OCI-LY7 (cell line): ENCODE measurements at regions of chr6 and their contacts with region 1.

Region 1: GRCh38 chr6:151451950-151452749 is at the start of gene RMND1:
- DNase-seq: peak; percentile 100
- H3K4me3 ChIP-seq: peak within 1 kb of the TSS; percentile 79
- H3K27ac ChIP-seq: peak within 1 kb of the TSS; percentile 70
- H3K4me1 ChIP-seq: peaks cover 24% of the 10 kb centered on the region
- CTCF ChIP-seq: no peak
- total RNA-seq, gene RMND1: 10.2 and 21.2 TPM in 2 replicates

Region 2: DNA sequence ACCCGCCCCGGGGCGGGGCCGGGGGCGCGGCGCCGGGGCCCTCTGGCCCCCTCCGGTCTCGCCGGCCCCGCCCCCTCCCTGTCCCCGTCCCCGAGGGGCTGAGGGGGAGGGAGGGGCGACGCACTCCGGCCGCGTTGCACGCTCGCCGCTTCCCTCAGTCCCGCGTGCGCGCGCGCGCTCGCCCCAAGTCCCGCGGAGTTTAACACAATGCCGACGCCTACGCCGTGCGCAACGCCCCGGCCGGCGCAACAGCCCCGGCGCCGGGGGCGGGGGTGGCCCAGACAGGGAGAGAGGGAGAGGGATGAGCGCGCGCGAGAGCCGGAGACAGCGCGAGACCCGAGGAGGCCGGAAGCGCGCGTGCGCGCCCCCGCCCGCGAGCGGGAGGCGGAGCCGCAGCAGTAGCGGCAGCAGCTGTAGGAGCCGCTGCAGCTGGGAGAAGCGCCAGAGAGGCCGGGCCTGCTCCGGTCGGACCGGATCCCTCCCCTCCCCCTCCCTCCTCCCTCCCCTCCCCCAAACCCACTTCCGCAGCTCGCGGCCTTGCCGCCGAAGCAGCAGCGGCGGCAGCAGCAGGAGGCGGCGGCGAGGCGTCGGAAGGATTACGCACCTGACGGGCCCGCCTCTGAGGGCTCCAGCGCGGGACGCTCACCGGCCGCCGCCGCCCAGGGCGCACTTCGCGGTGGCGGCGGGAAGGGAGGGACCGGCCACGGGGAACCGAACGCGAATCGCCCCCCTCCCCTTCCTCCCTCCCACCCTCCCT is 61.7 kb before region 1 on chr6:
- CTCF ChIA-PET with region 1: interaction called, 3 read pairs
- POLR2A ChIA-PET with region 1: interaction called, 6 read pairs
- intact Hi-C with region 1: loop called (anchors 1 kb)
- DNase-seq: peak; percentile 99
- H3K4me3 ChIP-seq: peak overlapping the region; percentile 99
- H3K27ac ChIP-seq: peak overlapping the region; percentile 97
- H3K4me1 ChIP-seq: peaks cover 55% of the 10 kb centered on the region
- CTCF ChIP-seq: no peak

Region 3: DNA sequence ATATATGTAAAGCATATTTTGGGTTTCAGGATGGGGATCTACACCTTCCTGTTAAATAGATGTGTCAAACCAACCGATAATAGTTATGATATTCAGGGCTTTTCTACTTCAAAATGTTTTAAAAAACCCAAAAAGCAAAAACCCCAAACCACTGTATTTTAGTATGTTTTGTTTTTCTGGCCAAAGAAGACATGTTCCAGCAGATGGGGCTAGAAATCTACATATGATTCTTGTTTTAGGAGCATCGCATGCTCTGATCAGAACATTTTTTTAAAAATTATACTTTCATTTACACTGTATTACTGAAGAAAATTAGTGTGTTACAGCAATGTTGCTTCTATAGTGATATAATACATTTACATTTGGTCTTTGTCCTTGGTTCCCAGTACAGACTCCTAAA is 11.2 kb before region 1 on chr6:
- CTCF ChIA-PET with region 1: no interaction called
- POLR2A ChIA-PET with region 1: interaction called, 15 read pairs
- intact Hi-C with region 1: no loop called
- DNase-seq: peak; percentile 16
- H3K4me3 ChIP-seq: no peak overlapping the region
- H3K27ac ChIP-seq: no peak overlapping the region
- H3K4me1 ChIP-seq: no peaks in the 10 kb centered on the region
- CTCF ChIP-seq: peak; percentile 66

Region 4: GRCh38 chr6:152295346-152295745 is 843.2 kb after region 1 on chr6:
- CTCF ChIA-PET with region 1: no interaction called
- POLR2A ChIA-PET with region 1: interaction called, 3 read pairs
- intact Hi-C with region 1: loop called (anchors 2 kb)
- DNase-seq: no peak
- H3K4me3 ChIP-seq: no peak overlapping the region
- H3K27ac ChIP-seq: no peak overlapping the region
- H3K4me1 ChIP-seq: peaks cover 43% of the 10 kb centered on the region
- CTCF ChIP-seq: no peak

Region 5: DNA sequence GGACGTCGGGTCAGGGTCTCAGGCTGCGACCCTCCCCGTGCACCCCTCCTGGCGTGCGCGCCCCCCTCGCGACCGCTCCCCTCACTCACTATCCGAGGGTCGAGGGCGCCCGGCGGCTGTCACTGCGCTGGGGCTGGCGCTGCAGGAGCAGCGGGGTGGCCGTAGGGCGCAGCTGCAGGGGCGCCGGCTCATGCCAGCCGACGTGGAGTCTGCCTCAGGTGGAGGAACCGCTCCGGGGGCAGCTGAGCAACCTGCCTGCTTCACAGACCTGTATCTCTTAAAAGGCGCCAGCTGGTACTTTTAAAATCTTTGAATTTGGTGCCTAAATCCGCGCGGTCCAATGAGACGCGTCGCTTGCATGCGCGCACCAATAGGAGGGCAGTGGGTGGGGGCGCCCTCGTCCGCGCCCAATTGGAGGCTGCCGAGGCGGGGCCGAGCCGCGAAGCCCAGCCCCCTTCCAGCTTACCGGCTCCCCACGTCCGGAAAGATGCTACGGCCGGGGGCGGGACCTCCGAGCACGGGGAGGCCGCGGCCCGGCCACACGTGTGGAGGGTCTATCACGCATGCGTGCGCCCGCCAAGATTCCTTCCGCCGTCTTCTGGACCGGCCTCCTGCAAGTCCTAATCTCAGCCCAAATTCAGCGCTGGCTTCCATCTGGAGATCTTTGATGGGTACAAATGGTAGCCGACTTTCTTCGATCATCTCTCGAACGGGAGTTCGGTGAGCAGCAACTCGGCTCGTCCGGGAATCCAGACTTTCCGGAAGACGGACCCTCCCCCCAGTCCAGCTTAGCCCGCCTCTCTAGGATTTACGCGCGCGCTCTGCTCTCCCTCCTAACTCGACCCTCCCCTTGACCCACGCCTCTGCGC is 1530.9 kb after region 1 on chr6 and contains the start of gene FBXO5:
- CTCF ChIA-PET with region 1: no interaction called
- POLR2A ChIA-PET with region 1: no interaction called
- intact Hi-C with region 1: loop called (anchors 5 kb)
- DNase-seq: peak; percentile 98
- H3K4me3 ChIP-seq: peak within 1 kb of the TSS; percentile 98
- H3K27ac ChIP-seq: peak within 1 kb of the TSS; percentile 87
- H3K4me1 ChIP-seq: peaks cover 44% of the 10 kb centered on the region
- CTCF ChIP-seq: no peak
- total RNA-seq, gene FBXO5: 47.8 and 53.2 TPM in 2 replicates